ENCODE measurements at regions of chr3 and their contacts with region 1.

Region 1: DNA sequence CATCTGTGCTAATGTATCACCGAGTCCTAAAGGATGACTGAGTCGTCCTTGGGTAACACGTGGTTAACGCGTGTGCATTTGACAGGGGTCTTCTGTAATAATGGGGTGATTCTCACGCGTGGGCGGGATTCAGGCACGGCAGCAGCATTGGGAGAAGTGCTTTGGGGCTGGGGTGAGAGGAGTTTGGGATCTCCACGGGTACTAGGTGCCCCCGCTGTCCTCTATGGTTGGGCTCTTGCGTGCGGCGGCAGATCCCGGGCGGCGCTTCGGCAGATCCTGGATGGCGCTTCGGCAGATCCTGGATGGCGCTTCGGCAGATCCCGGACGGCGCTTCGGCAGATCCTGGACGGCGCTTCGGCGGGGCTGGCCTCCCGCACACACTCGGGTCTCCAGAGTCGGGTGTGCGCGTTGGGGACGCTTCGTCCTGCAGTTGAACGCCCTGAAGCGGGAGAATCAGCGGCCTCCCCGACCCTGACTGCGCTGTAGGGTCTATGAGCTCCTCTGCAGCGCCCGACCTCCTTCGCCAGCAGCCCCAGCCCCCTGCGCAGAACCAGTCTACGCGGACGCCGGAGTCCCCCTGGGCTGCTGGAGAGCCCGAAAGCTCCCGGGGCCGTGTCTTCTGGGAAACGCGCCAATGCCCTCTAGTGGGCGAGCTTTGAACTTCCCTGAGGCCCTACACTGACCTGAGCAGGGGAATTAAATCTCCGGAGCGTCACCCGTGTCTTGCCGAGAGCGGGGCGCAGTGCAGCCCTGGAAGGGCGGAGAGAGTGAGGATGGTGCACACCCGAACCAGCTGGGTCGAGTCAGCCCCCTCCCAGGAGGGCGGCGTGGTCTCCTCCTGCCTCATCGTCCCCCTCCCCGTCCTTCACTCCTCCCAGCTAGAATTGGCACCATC is 48.1 kb upstream of the EPHB3 start:
- DNase-seq: peak; percentile 70 to 87 (median 77)
- ATAC-seq: peak; percentile 99
- H3K4me3 ChIP-seq: peak overlapping the region; percentile 46
- H3K4me3 Mint-ChIP-seq: peak overlapping the region; percentile 23
- H3K27ac ChIP-seq: no peak overlapping the region
- H3K27ac Mint-ChIP-seq: no peak overlapping the region
- H3K4me1 ChIP-seq: peaks cover 14% of the 10 kb centered on the region
- H3K4me1 Mint-ChIP-seq: peaks cover 5% of the 10 kb centered on the region
- H3K27me3 ChIP-seq: peaks cover 31 to 60% of the 10 kb centered on the region in 2 experiments
- H3K27me3 Mint-ChIP-seq: peaks cover 79% of the 10 kb centered on the region
- CTCF ChIP-seq: peak; percentile 77

Region 2: DNA sequence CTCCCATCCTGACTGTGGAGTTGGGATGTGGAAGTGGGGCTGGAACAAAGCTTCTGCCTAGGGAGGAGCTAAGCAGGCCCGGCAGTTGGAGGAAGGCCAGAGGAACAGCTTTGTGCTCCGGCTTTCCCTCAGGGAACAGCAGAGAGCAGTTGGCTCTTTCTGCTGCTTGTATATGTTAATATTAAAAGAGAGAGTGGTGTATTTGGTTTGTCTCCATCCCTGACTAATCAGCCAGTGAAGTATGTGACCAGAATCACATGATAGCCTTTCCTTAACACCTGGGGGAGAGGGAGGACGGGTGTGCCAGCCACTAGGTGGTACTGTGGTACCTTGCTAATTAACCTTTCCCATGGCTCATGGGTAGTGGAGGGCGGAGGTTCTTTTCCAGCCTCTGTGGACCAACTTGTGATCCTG is 368.4 kb before region 1 on chr3:
- CTCF ChIA-PET with region 1: no interaction called
- POLR2A ChIA-PET with region 1: no interaction called
- intact Hi-C with region 1: loop called in 1 of 2 experiments (anchors 10 kb)
- DNase-seq: peak in 9 of 14 experiments; percentile 16 to 67 (median 48)
- ATAC-seq: peak; percentile 80
- H3K4me3 ChIP-seq: no peak overlapping the region
- H3K4me3 Mint-ChIP-seq: no peak overlapping the region
- H3K27ac ChIP-seq: no peak overlapping the region
- H3K27ac Mint-ChIP-seq: no peak overlapping the region
- H3K4me1 ChIP-seq: no peaks in the 10 kb centered on the region
- H3K4me1 Mint-ChIP-seq: no peaks in the 10 kb centered on the region
- H3K27me3 ChIP-seq: no peaks in the 10 kb centered on the region
- H3K27me3 Mint-ChIP-seq: no peaks in the 10 kb centered on the region
- CTCF ChIP-seq: peak; percentile 31

Region 3: DNA sequence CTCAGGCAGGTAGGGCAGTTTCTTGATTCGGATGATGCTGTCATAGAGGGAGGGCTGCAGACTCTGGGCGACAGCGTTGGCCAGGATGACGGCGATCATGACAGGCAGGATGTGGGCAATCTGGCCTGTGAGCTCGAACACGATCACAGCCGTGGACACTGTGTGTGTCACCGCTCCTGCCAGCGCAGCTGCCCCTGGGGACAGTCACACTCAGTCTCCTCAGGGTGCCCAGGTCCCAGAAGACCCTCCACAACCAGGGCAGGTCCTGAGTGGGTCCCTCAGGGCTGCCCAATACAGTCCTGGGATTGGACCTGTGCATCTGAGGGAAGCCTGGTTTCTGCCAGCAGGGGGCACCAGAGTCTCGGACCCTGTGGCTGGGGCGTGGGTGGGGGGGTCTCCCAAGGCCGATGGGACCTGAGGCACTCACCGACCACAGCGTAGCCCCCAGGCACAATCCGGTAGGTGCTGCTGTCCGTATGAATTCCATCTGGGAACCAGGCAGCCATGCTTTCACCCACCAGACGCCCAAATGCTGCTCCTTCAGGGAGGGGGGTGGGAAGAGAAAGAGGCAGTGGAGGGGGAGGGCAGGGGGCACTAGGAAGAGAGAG is 159.3 kb before region 1 on chr3:
- CTCF ChIA-PET with region 1: interaction called, 8 read pairs
- POLR2A ChIA-PET with region 1: no interaction called
- intact Hi-C with region 1: loop called in 1 of 2 experiments (anchors 1 kb)
- DNase-seq: peak; percentile 44 to 82 (median 57)
- ATAC-seq: peak; percentile 72
- H3K4me3 ChIP-seq: no peak overlapping the region
- H3K4me3 Mint-ChIP-seq: no peak overlapping the region
- H3K27ac ChIP-seq: no peak overlapping the region
- H3K27ac Mint-ChIP-seq: no peak overlapping the region
- H3K4me1 ChIP-seq: peaks cover 8% of the 10 kb centered on the region
- H3K4me1 Mint-ChIP-seq: no peaks in the 10 kb centered on the region
- H3K27me3 ChIP-seq: no peaks in the 10 kb centered on the region
- H3K27me3 Mint-ChIP-seq: no peaks in the 10 kb centered on the region
- CTCF ChIP-seq: peak; percentile 74

Region 4: GRCh38 chr3:184371570-184372018 is 141.9 kb before region 1 on chr3:
- CTCF ChIA-PET with region 1: interaction called, 14 read pairs
- POLR2A ChIA-PET with region 1: interaction called, 3 read pairs
- intact Hi-C with region 1: loop called in 1 of 2 experiments (anchors 5 kb)
- DNase-seq: peak; percentile 42 to 83 (median 57)
- ATAC-seq: peak; percentile 100
- H3K4me3 ChIP-seq: no peak overlapping the region
- H3K4me3 Mint-ChIP-seq: no peak overlapping the region
- H3K27ac ChIP-seq: no peak overlapping the region
- H3K27ac Mint-ChIP-seq: no peak overlapping the region
- H3K4me1 ChIP-seq: peaks cover 5% of the 10 kb centered on the region
- H3K4me1 Mint-ChIP-seq: peaks cover 6% of the 10 kb centered on the region
- H3K27me3 ChIP-seq: peaks cover 0 to 10% of the 10 kb centered on the region in 2 experiments
- H3K27me3 Mint-ChIP-seq: peaks cover 7% of the 10 kb centered on the region
- CTCF ChIP-seq: peak; percentile 76

Region 5: GRCh38 chr3:184417619-184418327 is 95.8 kb before region 1 on chr3:
- CTCF ChIA-PET with region 1: no interaction called
- POLR2A ChIA-PET with region 1: interaction called, 3 read pairs
- intact Hi-C with region 1: loop called in 1 of 2 experiments (anchors 1 kb)
- DNase-seq: peak; percentile 58 to 85 (median 64)
- ATAC-seq: peak; percentile 99
- H3K4me3 ChIP-seq: no peak overlapping the region
- H3K4me3 Mint-ChIP-seq: no peak overlapping the region
- H3K27ac ChIP-seq: no peak overlapping the region
- H3K27ac Mint-ChIP-seq: no peak overlapping the region
- H3K4me1 ChIP-seq: peaks cover 4% of the 10 kb centered on the region
- H3K4me1 Mint-ChIP-seq: no peaks in the 10 kb centered on the region
- H3K27me3 ChIP-seq: no peaks in the 10 kb centered on the region
- H3K27me3 Mint-ChIP-seq: no peaks in the 10 kb centered on the region
- CTCF ChIP-seq: peak; percentile 87

Region 6: DNA sequence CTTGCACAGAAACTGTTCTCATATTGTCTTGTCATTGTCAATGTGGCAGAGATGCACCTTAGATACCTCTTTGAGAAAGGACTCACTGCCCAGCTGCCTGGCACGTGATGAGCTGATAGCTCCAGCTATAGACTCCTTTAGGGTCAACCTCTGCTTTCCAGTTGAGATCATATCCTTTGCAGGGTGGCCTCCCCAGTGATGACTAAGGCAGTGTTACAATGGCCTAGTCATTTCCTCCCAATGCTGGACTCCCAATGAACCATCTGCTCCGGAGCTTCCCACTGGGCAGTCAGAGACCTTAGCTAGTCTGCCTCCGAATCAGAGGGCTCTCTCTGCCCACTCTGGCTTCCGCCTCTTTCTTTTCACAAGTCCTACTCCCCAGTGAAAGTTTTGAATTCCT is 54.2 kb before region 1 on chr3:
- CTCF ChIA-PET with region 1: no interaction called
- POLR2A ChIA-PET with region 1: no interaction called
- intact Hi-C with region 1: no loop called
- DNase-seq: peak in 1 of 14 experiments; percentile 21
- ATAC-seq: no peak
- H3K4me3 ChIP-seq: no peak overlapping the region
- H3K4me3 Mint-ChIP-seq: no peak overlapping the region
- H3K27ac ChIP-seq: no peak overlapping the region
- H3K27ac Mint-ChIP-seq: no peak overlapping the region
- H3K4me1 ChIP-seq: no peaks in the 10 kb centered on the region
- H3K4me1 Mint-ChIP-seq: no peaks in the 10 kb centered on the region
- H3K27me3 ChIP-seq: peaks cover 0 to 3% of the 10 kb centered on the region in 2 experiments
- H3K27me3 Mint-ChIP-seq: peaks cover 5% of the 10 kb centered on the region
- CTCF ChIP-seq: no peak

Region 7: GRCh38 chr3:184469423-184469822 is 44.1 kb before region 1 on chr3:
- CTCF ChIA-PET with region 1: no interaction called
- POLR2A ChIA-PET with region 1: interaction called, 3 read pairs
- intact Hi-C with region 1: loop called in 1 of 2 experiments (anchors 5 kb)
- DNase-seq: peak in 3 of 14 experiments; percentile 13 to 34 (median 26)
- ATAC-seq: no peak
- H3K4me3 ChIP-seq: no peak overlapping the region
- H3K4me3 Mint-ChIP-seq: no peak overlapping the region
- H3K27ac ChIP-seq: no peak overlapping the region
- H3K27ac Mint-ChIP-seq: no peak overlapping the region
- H3K4me1 ChIP-seq: no peaks in the 10 kb centered on the region
- H3K4me1 Mint-ChIP-seq: peaks cover 23% of the 10 kb centered on the region
- H3K27me3 ChIP-seq: peaks cover 0 to 7% of the 10 kb centered on the region in 2 experiments
- H3K27me3 Mint-ChIP-seq: peaks cover 27% of the 10 kb centered on the region
- CTCF ChIP-seq: no peak

Region 8: GRCh38 chr3:184525337-184526087 is 12.0 kb after region 1 on chr3:
- CTCF ChIA-PET with region 1: interaction called, 13 read pairs
- POLR2A ChIA-PET with region 1: interaction called, 33 read pairs
- intact Hi-C with region 1: no loop called
- DNase-seq: peak in 4 of 14 experiments; percentile 18 to 37 (median 36)
- ATAC-seq: peak; percentile 61
- H3K4me3 ChIP-seq: peak overlapping the region; percentile 72
- H3K4me3 Mint-ChIP-seq: peak overlapping the region; percentile 87
- H3K27ac ChIP-seq: peak overlapping the region in 1 of 2 donors; percentile 35
- H3K27ac Mint-ChIP-seq: peak overlapping the region; percentile 60
- H3K4me1 ChIP-seq: peaks cover 12% of the 10 kb centered on the region
- H3K4me1 Mint-ChIP-seq: peaks cover 19% of the 10 kb centered on the region
- H3K27me3 ChIP-seq: peaks cover 8 to 16% of the 10 kb centered on the region in 2 experiments
- H3K27me3 Mint-ChIP-seq: peaks cover 45% of the 10 kb centered on the region
- CTCF ChIP-seq: no peak

Measured in CD4-positive, alpha-beta T cell (primary cell).